K562 (cell line): ENCODE measurements at regions of chr12 and their contacts with region 1.

Region 1: DNA sequence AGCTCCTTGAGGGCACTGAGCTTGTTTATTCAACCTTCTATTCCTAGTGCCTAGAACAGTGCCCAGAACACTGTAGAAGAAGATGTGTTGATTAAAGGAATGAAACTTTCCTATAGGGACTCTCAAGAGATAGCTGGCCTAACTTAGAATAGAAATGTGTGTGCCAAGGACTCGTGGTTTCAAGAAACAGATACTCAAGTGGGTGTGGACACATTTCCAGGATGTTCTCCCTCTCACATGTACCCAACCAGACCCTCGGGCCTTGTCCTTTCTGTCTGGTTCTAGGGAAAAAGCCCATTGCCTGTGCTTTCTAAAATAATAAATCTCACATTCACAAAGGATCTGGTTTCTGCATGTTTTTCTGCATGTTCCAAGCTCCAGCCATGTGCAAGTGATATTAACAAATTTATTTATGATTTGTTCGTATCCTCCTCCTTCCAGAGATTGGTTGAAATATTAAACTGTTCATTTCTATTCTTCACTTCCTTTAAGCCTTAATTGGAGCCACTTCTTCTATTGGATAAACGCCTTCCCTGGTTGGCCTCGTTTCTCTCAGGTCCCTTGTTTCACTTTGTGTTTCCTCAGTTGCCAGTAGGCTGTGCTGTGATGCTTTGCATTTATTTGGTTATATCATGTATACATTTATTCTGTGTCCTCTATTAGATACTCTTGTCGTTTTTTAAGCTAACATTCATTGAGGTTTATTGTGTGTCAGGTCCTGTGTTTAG is 89.8 kb downstream of the CRADD start:
- DNase-seq: peak in 1 of 4 experiments; percentile 61
- ATAC-seq: peak; percentile 62
- H3K4me3 ChIP-seq: no peak overlapping the region
- H3K27ac ChIP-seq: no peak overlapping the region
- H3K4me1 ChIP-seq: peaks cover 4 to 28% of the 10 kb centered on the region in 2 experiments; a peak in 4 of 5 replicates
- H3K27me3 ChIP-seq: no peaks in the 10 kb centered on the region
- CTCF ChIP-seq: peak; percentile 51 to 78 (median 61); a peak in 5 of 6 replicates
- EP300 ChIP-seq: no peak
- POLR2A ChIP-seq: no peak
- RAD21 ChIP-seq: peak; percentile 90 to 93

Region 2: DNA sequence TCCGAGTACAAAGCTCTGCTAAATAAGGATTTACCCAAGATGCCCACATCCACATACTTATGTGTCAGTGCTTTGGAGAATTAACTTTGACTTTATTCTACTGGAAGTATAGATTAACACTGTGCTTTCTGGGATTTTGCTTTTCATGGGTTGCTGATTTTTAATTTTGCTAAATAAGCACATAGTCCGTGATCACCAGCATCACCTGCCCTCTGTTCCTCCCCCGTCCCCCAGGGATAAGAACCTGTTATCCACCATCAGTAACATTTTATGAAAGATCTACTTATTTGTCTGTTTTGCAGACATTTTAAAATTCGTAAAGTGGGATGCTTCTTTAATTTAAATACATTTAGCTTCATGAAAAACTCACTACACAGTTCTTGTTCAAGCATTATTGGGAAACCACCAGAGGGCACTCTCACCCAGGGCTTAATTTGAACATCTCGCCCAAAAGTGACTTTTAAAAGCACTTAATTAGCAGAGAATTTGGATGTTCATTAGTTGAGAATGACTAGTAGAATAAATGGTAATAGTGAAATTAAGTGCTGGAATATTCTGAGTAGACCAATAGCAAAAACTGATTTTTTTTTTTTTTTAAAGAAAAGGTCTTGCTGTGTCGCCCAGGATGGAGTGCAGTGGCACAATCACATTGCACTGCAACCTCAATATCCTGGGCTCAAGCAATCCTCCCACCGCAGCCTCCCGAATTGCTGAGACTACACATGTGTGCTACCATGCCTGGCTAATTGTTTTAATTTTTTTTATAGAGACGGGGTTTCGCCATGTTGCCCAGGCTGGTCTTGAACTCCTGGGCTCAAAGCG is 263.9 kb before region 1 on chr12:
- CTCF ChIA-PET with region 1: interaction called, 3 read pairs
- POLR2A ChIA-PET with region 1: no interaction called
- in situ Hi-C with region 1: loop called (anchors 10 kb)
- intact Hi-C with region 1: loop called (anchors 5 kb)
- DNase-seq: peak in 2 of 4 experiments; percentile 20 to 64
- ATAC-seq: peak; percentile 76
- H3K4me3 ChIP-seq: no peak overlapping the region
- H3K27ac ChIP-seq: no peak overlapping the region
- H3K4me1 ChIP-seq: no peaks in the 10 kb centered on the region
- H3K27me3 ChIP-seq: no peaks in the 10 kb centered on the region
- CTCF ChIP-seq: peak; percentile 49 to 85 (median 71); a peak in 5 of 6 replicates
- EP300 ChIP-seq: no peak
- POLR2A ChIP-seq: no peak
- RAD21 ChIP-seq: peak; percentile 90 to 92

Region 3: GRCh38 chr12:93591137-93591868 is 175.7 kb before region 1 on chr12:
- CTCF ChIA-PET with region 1: no interaction called
- POLR2A ChIA-PET with region 1: no interaction called
- in situ Hi-C with region 1: no loop called
- intact Hi-C with region 1: loop called (anchors 5 kb)
- DNase-seq: peak; percentile 54 to 85 (median 68)
- ATAC-seq: peak; percentile 84
- H3K4me3 ChIP-seq: peak overlapping the region; percentile 49
- H3K27ac ChIP-seq: peak overlapping the region; percentile 85
- H3K4me1 ChIP-seq: peaks cover 4 to 14% of the 10 kb centered on the region in 2 experiments
- H3K27me3 ChIP-seq: no peaks in the 10 kb centered on the region
- CTCF ChIP-seq: no peak
- EP300 ChIP-seq: peak; percentile 53
- POLR2A ChIP-seq: peak; percentile 88
- RAD21 ChIP-seq: peak in 1 of 2 experiments; percentile 28; a peak in 1 of 4 replicates

Region 4: GRCh38 chr12:93802698-93803423 is 35.9 kb after region 1 on chr12:
- CTCF ChIA-PET with region 1: no interaction called
- POLR2A ChIA-PET with region 1: interaction called, 3 read pairs
- in situ Hi-C with region 1: no loop called
- intact Hi-C with region 1: loop called (anchors 1 kb)
- DNase-seq: peak in 1 of 4 experiments; percentile 20
- ATAC-seq: peak; percentile 75
- H3K4me3 ChIP-seq: no peak overlapping the region
- H3K27ac ChIP-seq: no peak overlapping the region
- H3K4me1 ChIP-seq: peaks cover 8 to 29% of the 10 kb centered on the region in 2 experiments; a peak in 4 of 5 replicates
- H3K27me3 ChIP-seq: no peaks in the 10 kb centered on the region
- CTCF ChIP-seq: peak in 1 of 3 experiments; percentile 45; a peak in 2 of 6 replicates
- EP300 ChIP-seq: no peak
- POLR2A ChIP-seq: no peak
- RAD21 ChIP-seq: peak; percentile 47 to 56